Endothelial cell of umbilical vein (primary cell): ENCODE measurements at regions of chr10 and their contacts with region 1.

Region 1: GRCh38 chr10:57362811-57363210 is 904.9 kb downstream of the IPMK start:
- DNase-seq: no peak
- H3K4me3 ChIP-seq: no peak overlapping the region
- H3K27ac ChIP-seq: no peak overlapping the region
- H3K4me1 ChIP-seq: no peaks in the 10 kb centered on the region
- H3K27me3 ChIP-seq: no peaks in the 10 kb centered on the region
- CTCF ChIP-seq: no peak
- POLR2A ChIP-seq: no peak

Region 2: GRCh38 chr10:57395923-57396322 is 33.1 kb after region 1 on chr10:
- CTCF ChIA-PET with region 1: no interaction called
- POLR2A ChIA-PET with region 1: no interaction called
- dilution Hi-C with region 1: no loop called
- intact Hi-C with region 1: no loop called
- DNase-seq: no peak
- H3K4me3 ChIP-seq: no peak overlapping the region
- H3K27ac ChIP-seq: no peak overlapping the region
- H3K4me1 ChIP-seq: no peaks in the 10 kb centered on the region
- H3K27me3 ChIP-seq: no peaks in the 10 kb centered on the region
- CTCF ChIP-seq: no peak
- POLR2A ChIP-seq: no peak

Region 3: DNA sequence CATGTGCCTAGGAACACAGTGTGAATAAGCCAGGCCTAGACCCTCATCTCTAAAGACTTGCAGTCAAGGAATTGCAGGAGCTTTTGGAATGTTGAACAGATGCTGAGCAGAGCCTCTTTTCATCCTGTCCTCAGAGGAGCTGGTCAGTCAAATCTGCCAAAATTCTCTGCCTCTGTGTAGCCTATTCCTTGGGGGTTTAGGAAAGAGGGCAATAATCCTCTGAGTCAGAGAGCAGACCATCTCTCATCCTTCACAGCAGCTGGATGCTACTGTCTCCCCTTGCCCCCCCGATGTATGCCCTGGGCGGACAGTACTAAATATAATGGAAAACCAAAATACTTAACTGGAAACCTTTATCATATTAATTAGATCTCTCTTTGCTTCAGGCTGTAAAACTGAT is 1202.5 kb after region 1 on chr10:
- CTCF ChIA-PET with region 1: no interaction called
- POLR2A ChIA-PET with region 1: no interaction called
- dilution Hi-C with region 1: no loop called
- intact Hi-C with region 1: loop called (anchors 10 kb)
- DNase-seq: no peak
- H3K4me3 ChIP-seq: no peak overlapping the region
- H3K27ac ChIP-seq: no peak overlapping the region
- H3K4me1 ChIP-seq: no peaks in the 10 kb centered on the region
- H3K27me3 ChIP-seq: no peaks in the 10 kb centered on the region
- CTCF ChIP-seq: no peak
- POLR2A ChIP-seq: no peak